ENCODE measurements at regions of chr11 and their contacts with region 1.

Region 1: GRCh38 chr11:8566613-8567210 is 27.3 kb downstream of the STK33 start:
- DNase-seq: no peak
- H3K4me3 Mint-ChIP-seq: no peak overlapping the region
- H3K27ac Mint-ChIP-seq: no peak overlapping the region
- H3K4me1 Mint-ChIP-seq: no peaks in the 10 kb centered on the region
- H3K27me3 Mint-ChIP-seq: peaks cover 4% of the 10 kb centered on the region

Region 2: DNA sequence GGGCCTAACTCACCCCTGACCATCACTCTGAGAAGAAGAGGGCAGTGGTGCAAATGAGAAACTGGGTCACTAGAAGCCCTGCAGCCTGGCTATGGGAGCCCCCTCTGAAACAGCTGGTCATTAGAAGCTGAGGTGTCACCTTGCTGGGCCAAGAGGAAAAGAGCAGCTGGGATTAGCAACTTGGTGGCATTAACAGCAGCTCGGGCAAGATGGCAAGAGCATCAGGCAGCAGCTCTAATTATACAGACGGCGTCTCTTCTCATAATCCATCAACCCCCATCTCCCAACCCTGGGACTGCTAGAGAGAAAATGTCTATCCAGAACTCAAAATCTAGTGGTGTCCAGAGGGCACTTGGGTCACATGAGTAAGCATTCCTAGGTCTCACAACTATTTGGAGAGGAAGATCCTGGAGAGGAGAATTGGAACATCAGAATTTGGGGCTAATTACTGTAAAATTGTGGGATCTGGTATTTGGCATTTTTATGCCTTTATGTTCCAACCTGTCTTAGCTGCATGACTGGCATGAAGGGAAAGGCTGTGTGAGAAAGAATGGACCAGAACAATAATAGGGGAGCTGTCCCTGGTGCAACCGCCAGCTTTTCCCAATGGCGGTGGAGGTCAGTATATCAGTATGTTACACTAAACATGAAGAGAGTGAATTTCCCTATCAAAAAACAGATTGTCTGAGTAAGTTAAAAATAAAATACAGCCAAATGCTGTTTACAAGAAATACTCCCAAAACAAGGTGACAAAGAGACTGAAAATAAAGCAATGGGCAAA is 295.4 kb before region 1 on chr11:
- CTCF ChIA-PET with region 1: no interaction called
- DNase-seq: no peak
- H3K4me3 Mint-ChIP-seq: no peak overlapping the region
- H3K27ac Mint-ChIP-seq: no peak overlapping the region
- H3K4me1 Mint-ChIP-seq: peaks cover 2% of the 10 kb centered on the region
- H3K27me3 Mint-ChIP-seq: peaks cover 63% of the 10 kb centered on the region

Region 3: GRCh38 chr11:8577791-8578581 is 11.3 kb after region 1 on chr11:
- CTCF ChIA-PET with region 1: interaction called, 12 read pairs
- DNase-seq: no peak
- H3K4me3 Mint-ChIP-seq: no peak overlapping the region
- H3K27ac Mint-ChIP-seq: no peak overlapping the region
- H3K4me1 Mint-ChIP-seq: no peaks in the 10 kb centered on the region
- H3K27me3 Mint-ChIP-seq: peaks cover 8% of the 10 kb centered on the region